ENCODE measurements at regions of chr2 and their contacts with region 1.

Region 1: DNA sequence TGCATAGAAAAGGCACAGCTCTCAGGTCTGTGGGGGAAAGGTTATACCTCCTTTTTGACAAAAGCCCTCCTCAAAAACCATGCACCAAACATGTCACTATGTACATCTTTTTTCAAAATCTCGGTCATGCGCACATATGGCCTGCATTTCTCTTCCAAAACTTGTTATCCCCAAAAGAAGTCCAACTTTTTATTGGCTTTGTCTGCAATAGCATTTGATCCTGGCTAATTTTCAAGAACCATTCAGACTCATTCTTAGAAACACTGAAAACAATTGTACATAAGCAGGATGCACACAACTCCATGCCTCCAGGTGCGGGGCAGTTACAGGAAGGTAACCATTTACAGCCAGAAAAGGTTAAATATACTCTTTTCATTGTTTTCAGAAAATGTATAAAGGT is 21.9 kb downstream of the SERTAD2 start:
- DNase-seq: no peak
- H3K4me3 ChIP-seq: no peak overlapping the region
- H3K27ac ChIP-seq: no peak overlapping the region
- H3K4me1 ChIP-seq: peaks cover 17% of the 10 kb centered on the region
- H3K27me3 ChIP-seq: no peaks in the 10 kb centered on the region
- CTCF ChIP-seq: no peak

Region 2: DNA sequence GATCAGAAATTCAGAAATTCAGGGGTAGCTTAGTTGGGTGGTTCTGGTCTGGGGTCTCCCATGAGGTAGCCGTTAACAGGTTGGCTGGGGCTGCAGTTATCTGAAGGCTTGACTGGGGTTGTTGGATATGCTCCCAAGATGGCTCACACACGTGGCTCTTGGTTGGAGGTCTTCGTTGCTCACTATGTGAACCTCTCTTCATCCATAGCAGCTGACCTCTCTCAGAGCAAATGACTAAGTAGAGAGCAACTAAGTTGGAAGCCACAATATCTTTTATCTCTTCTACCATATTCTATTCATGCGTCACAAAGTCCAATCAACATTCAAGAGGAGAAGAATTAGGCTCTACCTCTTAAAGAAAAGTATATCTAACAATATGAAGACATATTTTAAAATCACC is 60.6 kb after region 1 on chr2:
- CTCF ChIA-PET with region 1: no interaction called
- POLR2A ChIA-PET with region 1: interaction called, 22 read pairs
- intact Hi-C with region 1: no loop called
- DNase-seq: no peak
- H3K4me3 ChIP-seq: no peak overlapping the region
- H3K27ac ChIP-seq: no peak overlapping the region
- H3K4me1 ChIP-seq: no peaks in the 10 kb centered on the region
- H3K27me3 ChIP-seq: no peaks in the 10 kb centered on the region
- CTCF ChIP-seq: no peak

Region 3: DNA sequence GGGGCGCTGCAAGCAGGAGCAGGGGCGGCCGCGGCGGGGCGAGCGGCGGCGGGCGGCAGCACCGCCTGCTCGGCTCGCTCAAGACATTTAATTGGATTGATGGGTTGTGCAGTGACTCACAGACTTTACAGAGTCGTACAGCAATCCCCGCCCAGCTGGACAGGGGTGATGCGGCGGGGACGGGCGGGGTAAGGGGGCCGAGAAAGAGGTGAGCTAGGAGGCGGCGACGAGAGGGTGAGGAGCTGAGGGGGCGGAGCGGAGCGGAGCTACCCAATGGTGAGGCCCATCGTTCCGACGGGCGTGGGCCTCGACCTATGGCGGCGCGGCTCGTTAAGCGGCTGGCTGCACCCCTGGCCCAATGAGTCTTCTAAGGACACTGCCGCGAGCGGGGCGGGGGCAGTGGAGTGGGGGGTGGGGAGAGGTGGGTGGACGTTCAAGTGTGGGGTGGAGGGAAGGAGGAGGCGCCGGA is 119.1 kb after region 1 on chr2:
- CTCF ChIA-PET with region 1: no interaction called
- POLR2A ChIA-PET with region 1: no interaction called
- intact Hi-C with region 1: no loop called
- DNase-seq: peak; percentile 100
- H3K4me3 ChIP-seq: peak overlapping the region; percentile 78
- H3K27ac ChIP-seq: peak overlapping the region; percentile 91
- H3K4me1 ChIP-seq: peaks cover 16% of the 10 kb centered on the region
- H3K27me3 ChIP-seq: no peaks in the 10 kb centered on the region
- CTCF ChIP-seq: no peak